Mammary epithelial cell (primary cell): ENCODE measurements at regions of chr22 and their contacts with region 1.

Region 1: DNA sequence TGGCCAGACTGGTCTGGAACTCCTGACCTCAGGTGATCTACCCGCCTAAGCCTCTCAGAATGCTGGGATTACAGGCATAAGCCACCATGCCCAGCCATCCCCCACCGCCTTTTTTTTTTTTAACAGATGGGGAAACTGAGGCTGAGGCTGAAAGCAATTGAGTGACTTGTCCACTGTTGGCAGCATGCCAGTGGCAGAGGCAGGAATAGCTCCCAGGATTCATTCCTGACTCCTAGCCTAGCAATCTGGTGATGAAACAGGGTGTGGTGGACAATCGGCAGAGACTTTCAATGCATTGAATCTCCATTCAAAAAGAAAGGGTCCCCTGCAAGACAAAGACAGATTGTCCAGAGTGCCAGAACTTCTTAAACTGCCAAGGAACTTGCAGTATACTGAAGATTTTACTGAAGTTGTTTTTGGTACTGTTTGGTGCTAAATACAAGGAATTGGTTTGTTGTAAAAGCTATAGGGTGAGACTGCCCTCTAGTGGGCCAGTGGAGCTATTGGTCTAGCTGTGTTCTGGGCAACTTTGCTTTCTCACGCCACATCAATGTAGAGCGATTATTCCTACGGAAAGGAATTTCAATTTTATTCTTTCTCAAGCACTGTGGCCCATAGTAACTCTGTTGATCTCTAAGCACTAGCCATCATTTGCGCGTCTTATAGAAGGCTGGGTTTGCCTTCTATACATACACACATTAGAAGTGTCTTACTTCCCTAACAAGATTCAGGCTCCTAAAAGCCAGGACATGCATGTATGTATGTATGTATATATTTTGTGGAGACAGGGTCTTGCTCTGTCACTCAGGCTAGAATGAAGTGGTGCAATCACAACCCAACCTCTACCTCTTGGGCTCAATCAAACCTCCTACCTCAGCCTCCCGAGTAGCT is 21.0 kb downstream of the C22orf31 start:
- DNase-seq: peak; percentile 63
- H3K4me3 ChIP-seq: no peak overlapping the region
- H3K27ac ChIP-seq: peak overlapping the region; percentile 25
- H3K4me1 ChIP-seq: peaks cover 30% of the 10 kb centered on the region
- H3K27me3 ChIP-seq: no peaks in the 10 kb centered on the region
- CTCF ChIP-seq: peak; percentile 98 to 99

Region 2: DNA sequence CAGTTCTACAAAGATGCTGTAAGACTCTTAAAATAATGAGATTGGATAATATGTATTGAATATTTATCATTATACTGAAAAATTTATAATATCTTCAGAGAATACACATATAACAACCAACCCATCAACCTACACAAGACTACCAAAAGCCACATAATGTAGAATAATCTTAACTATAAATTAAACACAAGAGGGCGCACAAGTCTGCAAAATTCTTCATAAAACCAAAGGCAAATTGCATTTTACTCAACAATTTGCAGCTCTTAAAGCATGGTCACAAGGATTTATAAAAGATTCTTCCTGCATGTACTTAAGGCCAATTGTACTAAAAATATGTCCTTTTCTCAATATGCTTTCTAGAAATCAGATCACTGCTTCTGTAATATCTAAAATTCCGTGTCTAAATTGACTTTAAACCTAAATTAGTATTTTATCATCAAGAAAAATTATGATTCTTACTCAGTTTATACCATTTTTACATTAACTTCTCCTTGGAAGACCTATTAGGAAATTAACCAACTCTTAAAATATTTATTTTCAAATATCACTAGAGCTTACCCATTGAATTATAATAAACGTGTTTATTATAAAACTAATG is 440.0 kb before region 1 on chr22:
- CTCF ChIA-PET with region 1: interaction called, 6 read pairs
- dilution Hi-C with region 1: no loop called
- in situ Hi-C with region 1: loop called (anchors 25 kb)
- intact Hi-C with region 1: loop called (anchors 1 kb)
- DNase-seq: peak; percentile 24
- H3K4me3 ChIP-seq: no peak overlapping the region
- H3K27ac ChIP-seq: no peak overlapping the region
- H3K4me1 ChIP-seq: no peaks in the 10 kb centered on the region
- H3K27me3 ChIP-seq: no peaks in the 10 kb centered on the region
- CTCF ChIP-seq: peak; percentile 34 to 46

Region 3: DNA sequence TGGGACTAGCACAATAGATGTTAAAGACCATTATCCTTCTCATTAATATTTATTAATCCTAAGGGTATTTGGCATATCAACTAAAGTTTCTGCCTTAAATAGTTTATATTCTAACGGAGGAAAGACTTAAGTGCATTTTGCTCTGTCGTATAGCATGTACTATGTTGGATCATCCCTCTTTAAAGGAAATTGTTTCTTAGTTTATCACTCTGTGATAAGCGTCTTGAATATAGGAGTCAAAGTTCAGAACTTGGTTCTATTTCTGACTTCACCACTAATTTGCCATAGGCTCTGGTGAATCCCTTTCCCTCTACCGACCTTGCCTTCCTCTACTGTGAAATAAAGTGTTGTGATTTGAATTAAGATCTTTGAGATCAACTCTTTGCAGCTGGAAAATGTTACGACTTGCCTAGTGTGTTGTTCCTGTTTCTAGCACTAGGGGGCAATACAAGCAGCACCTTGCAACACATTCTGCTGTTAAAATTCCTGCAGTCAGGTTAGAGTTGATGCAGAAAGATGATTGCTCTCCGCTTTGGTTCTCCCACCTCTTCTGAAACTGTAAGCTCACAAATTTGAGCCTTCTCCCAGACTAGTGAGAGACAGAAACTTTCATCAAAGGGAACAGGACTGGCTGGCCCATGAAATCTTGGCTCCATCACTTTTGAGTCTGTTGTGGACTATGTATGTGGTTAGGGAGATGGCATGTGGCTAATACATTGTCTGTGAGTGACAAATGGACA is 185.1 kb before region 1 on chr22:
- CTCF ChIA-PET with region 1: interaction called, 10 read pairs
- dilution Hi-C with region 1: no loop called
- in situ Hi-C with region 1: loop called (anchors 5 kb)
- intact Hi-C with region 1: loop called (anchors 1 kb)
- DNase-seq: peak; percentile 50
- H3K4me3 ChIP-seq: no peak overlapping the region
- H3K27ac ChIP-seq: no peak overlapping the region
- H3K4me1 ChIP-seq: no peaks in the 10 kb centered on the region
- H3K27me3 ChIP-seq: no peaks in the 10 kb centered on the region
- CTCF ChIP-seq: peak; percentile 85 to 91

Region 4: GRCh38 chr22:29108109-29108508 is 67.5 kb after region 1 on chr22:
- CTCF ChIA-PET with region 1: no interaction called
- dilution Hi-C with region 1: no loop called
- in situ Hi-C with region 1: no loop called
- intact Hi-C with region 1: no loop called
- DNase-seq: peak; percentile 68
- H3K4me3 ChIP-seq: no peak overlapping the region
- H3K27ac ChIP-seq: no peak overlapping the region
- H3K4me1 ChIP-seq: peaks cover 14% of the 10 kb centered on the region
- H3K27me3 ChIP-seq: no peaks in the 10 kb centered on the region
- CTCF ChIP-seq: no peak